Right cardiac atrium (tissue), 5 donors: ENCODE measurements at regions of chr18 and their contacts with region 1.

Region 1: DNA sequence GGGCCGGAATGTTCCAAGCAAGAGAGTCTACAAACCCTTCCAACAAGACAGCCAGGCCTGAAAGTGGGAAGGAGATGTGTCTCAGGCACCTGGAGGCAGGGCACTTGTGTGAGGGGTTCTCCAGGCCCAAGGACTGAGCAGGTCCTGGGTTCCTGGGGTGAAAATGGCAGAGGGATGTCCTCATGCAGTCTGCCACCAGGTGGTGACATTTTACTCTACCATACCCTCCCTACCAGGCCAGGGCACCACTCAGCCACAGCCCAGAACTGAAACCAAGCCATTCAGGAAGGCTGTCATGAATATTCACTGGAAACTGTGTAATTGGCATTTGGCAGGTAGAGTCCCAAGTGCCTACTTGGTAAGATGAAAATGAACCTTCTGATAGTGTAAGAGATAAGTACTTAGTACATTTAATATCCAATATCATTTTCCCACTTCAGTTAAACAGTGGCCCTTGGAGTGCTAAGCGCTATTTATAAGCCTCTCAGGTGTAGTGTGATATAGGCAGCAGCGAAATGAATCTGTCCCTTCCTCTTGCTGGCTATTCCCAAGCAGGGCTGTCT is 185.1 kb downstream of the MYO5B start:
- DNase-seq: peak in 1 of 3 donors; percentile 57
- ATAC-seq: peak; percentile 61 to 62
- H3K4me3 ChIP-seq: no peak overlapping the region
- H3K27ac ChIP-seq: no peak overlapping the region
- H3K4me1 ChIP-seq: no peaks in the 10 kb centered on the region
- H3K27me3 ChIP-seq: no peaks in the 10 kb centered on the region

Region 2: GRCh38 chr18:49898421-49898820 is 111.4 kb before region 1 on chr18:
- intact Hi-C with region 1: no loop called
- DNase-seq: peak in 2 of 3 donors; percentile 53 to 75
- ATAC-seq: no peak
- H3K4me3 ChIP-seq: no peak overlapping the region
- H3K27ac ChIP-seq: no peak overlapping the region
- H3K4me1 ChIP-seq: no peaks in the 10 kb centered on the region
- H3K27me3 ChIP-seq: no peaks in the 10 kb centered on the region

Region 3: GRCh38 chr18:50192903-50193795 is 183.3 kb after region 1 on chr18:
- intact Hi-C with region 1: no loop called
- DNase-seq: peak in 1 of 3 donors; percentile 60
- ATAC-seq: no peak
- H3K4me3 ChIP-seq: no peak overlapping the region
- H3K27ac ChIP-seq: no peak overlapping the region
- H3K4me1 ChIP-seq: no peaks in the 10 kb centered on the region
- H3K27me3 ChIP-seq: no peaks in the 10 kb centered on the region

Region 4: GRCh38 chr18:50203801-50204604 is 194.1 kb after region 1 on chr18:
- intact Hi-C with region 1: loop called in 1 of 4 experiments (anchors 10 kb)
- DNase-seq: no peak
- ATAC-seq: peak in 1 of 2 donors; percentile 32
- H3K4me3 ChIP-seq: peak overlapping the region; percentile 35
- H3K27ac ChIP-seq: no peak overlapping the region
- H3K4me1 ChIP-seq: no peaks in the 10 kb centered on the region
- H3K27me3 ChIP-seq: no peaks in the 10 kb centered on the region

Region 5: DNA sequence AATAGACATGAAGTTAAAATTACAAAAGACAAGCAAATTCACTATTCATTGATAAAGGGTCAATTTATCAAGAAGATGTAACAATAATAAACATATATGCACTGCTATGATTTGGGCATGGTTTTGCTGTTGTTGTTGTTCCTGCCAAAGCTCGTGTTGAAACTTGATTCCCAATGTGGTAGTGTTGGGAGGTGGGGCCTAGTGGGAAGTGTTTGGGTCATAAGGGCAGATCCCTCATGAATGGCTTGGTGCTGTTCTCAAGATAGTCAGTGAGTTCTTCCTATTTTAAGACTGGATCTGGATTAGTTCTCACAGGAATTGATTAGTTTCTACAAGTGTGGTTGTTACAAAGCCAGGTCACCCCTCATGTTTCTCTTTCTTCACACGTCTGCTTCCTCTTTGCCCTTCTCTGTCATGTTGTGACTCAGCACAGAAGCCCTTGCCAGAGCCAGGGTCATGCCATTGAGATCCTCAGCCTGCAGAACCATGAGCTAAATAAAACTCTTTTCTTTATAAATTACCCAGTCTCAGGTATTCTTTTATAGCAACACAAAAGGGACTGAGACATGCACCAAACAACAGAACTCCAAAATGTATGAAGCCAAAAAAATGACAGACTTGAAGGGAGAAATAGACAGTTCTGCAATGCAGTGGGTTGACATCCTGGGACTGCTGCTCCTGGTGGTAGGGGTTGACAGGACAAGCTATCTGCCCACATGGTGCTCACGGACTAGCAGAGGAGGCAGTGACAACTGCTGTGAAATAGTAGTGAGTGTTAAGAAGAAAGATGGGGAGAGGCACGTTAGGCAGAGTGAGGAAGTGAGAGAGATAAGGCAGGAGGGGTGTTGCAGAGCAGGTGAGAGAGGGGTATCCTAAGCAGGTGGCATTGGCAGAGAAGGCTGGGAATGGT is 346.4 kb after region 1 on chr18:
- intact Hi-C with region 1: loop called in 1 of 4 experiments (anchors 10 kb)
- DNase-seq: no peak
- ATAC-seq: peak in 1 of 2 donors; percentile 47
- H3K4me3 ChIP-seq: no peak overlapping the region
- H3K27ac ChIP-seq: no peak overlapping the region
- H3K4me1 ChIP-seq: no peaks in the 10 kb centered on the region
- H3K27me3 ChIP-seq: no peaks in the 10 kb centered on the region

Region 6: GRCh38 chr18:50559752-50560680 is 550.2 kb after region 1 on chr18 and contains the start of gene MAPK4:
- intact Hi-C with region 1: no loop called
- DNase-seq: peak; percentile 52 to 80 (median 80)
- ATAC-seq: peak; percentile 87 to 91
- H3K4me3 ChIP-seq: peak within 1 kb of the TSS; percentile 88
- H3K27ac ChIP-seq: peak within 1 kb of the TSS; percentile 80
- H3K4me1 ChIP-seq: no peaks in the 10 kb centered on the region
- H3K27me3 ChIP-seq: no peaks in the 10 kb centered on the region
- total RNA-seq, gene MAPK4: 24.9 to 73.9 (median 35.1) TPM